A549 (cell line): ENCODE measurements at regions of chr14 and their contacts with region 1.

Region 1: GRCh38 chr14:31207755-31208545 is at the start of gene HECTD1:
- DNase-seq: peak; percentile 85 to 92
- ATAC-seq: peak; percentile 89 to 90
- H3K4me3 ChIP-seq: peak within 1 kb of the TSS; percentile 92
- H3K27ac ChIP-seq: peak within 1 kb of the TSS; percentile 96 to 99
- H3K4me1 ChIP-seq: peaks cover 16% of the 10 kb centered on the region
- CTCF ChIP-seq: peak; percentile 90
- EP300 ChIP-seq: no peak
- POLR2A ChIP-seq: peak; percentile 95
- RAD21 ChIP-seq: peak; percentile 36 to 86; a peak in 4 of 5 replicates
- polyA plus RNA-seq, gene HECTD1: 149 and 154 TPM in 2 replicates

Region 2: GRCh38 chr14:31166271-31166710 is 41.7 kb before region 1 on chr14:
- CTCF ChIA-PET with region 1: interaction called, 5 read pairs
- POLR2A ChIA-PET with region 1: interaction called, 15 read pairs
- DNase-seq: no peak
- ATAC-seq: peak; percentile 49 to 74; a peak in 5 of 6 replicates
- H3K4me3 ChIP-seq: no peak overlapping the region
- H3K27ac ChIP-seq: peak overlapping the region; percentile 80 to 90
- H3K4me1 ChIP-seq: peaks cover 46% of the 10 kb centered on the region
- CTCF ChIP-seq: no peak
- EP300 ChIP-seq: no peak
- POLR2A ChIP-seq: no peak
- RAD21 ChIP-seq: no peak

Region 3: GRCh38 chr14:31219169-31219568 is 11.2 kb after region 1 on chr14:
- CTCF ChIA-PET with region 1: interaction called, 25 read pairs
- POLR2A ChIA-PET with region 1: interaction called, 5 read pairs
- DNase-seq: no peak
- ATAC-seq: no peak
- H3K4me3 ChIP-seq: no peak overlapping the region
- H3K27ac ChIP-seq: no peak overlapping the region
- H3K4me1 ChIP-seq: 0 out of 3 replicates have a peak, but pooled peaks cover 6% of the 10 kb centered on the region
- CTCF ChIP-seq: no peak
- EP300 ChIP-seq: no peak
- POLR2A ChIP-seq: no peak
- RAD21 ChIP-seq: no peak

Region 4: DNA sequence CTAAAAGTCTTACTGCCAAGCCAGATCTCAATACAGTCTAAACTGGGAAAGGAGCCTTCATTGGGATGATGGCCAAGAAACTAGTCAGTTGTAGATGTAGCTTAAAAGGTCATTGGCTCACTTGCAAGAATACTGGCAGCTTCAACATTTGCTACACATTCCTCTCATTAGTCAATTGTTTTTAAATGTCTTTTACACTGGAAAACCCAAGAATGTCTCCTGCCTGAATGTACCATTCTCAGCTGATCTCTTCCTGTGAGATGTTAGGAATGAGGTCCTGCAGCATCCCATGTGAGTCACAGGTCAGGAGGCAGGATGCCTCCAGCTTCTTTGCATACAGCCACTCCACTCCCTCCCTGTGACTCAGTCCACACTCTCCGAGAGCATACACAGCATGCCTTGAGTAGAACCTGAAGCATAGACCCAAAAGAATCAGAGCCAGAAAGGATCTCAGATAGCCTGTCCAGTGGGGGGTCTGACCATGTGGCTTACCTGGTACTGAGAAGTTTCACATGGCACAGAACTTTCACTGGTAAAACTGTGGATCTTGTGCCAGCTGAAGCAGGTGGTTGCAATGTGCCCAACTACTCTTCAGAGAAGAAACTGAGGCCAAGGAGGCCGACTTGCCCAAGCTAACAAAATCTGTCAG is 55.7 kb after region 1 on chr14:
- CTCF ChIA-PET with region 1: interaction called, 9 read pairs
- POLR2A ChIA-PET with region 1: interaction called, 14 read pairs
- DNase-seq: peak; percentile 57 to 77
- ATAC-seq: peak; percentile 99 to 100
- H3K4me3 ChIP-seq: no peak overlapping the region
- H3K27ac ChIP-seq: peak overlapping the region; percentile 27 to 73; a peak in 5 of 6 replicates
- H3K4me1 ChIP-seq: peaks cover 35% of the 10 kb centered on the region
- CTCF ChIP-seq: no peak
- EP300 ChIP-seq: peak in 1 of 2 experiments; percentile 30; a peak in 1 of 5 replicates
- POLR2A ChIP-seq: no peak
- RAD21 ChIP-seq: no peak

Region 5: GRCh38 chr14:31449971-31450610 is 242.1 kb after region 1 on chr14:
- CTCF ChIA-PET with region 1: interaction called, 11 read pairs
- POLR2A ChIA-PET with region 1: interaction called, 3 read pairs
- DNase-seq: peak; percentile 33 to 56
- ATAC-seq: peak; percentile 78 to 83
- H3K4me3 ChIP-seq: no peak overlapping the region
- H3K27ac ChIP-seq: peak overlapping the region in 1 of 2 experiments; percentile 5; a peak in 1 of 6 replicates
- H3K4me1 ChIP-seq: peaks cover 30% of the 10 kb centered on the region
- CTCF ChIP-seq: peak; percentile 61
- EP300 ChIP-seq: no peak
- POLR2A ChIP-seq: no peak
- RAD21 ChIP-seq: peak; percentile 66 to 73